CD4-positive, alpha-beta T cell (primary cell): ENCODE measurements at regions of chr6 and their contacts with region 1.

Region 1: GRCh38 chr6:116531675-116532570 is 13.6 kb downstream of the TRAPPC3L start:
- DNase-seq: peak; percentile 31 to 83 (median 52)
- ATAC-seq: peak; percentile 99
- H3K4me3 ChIP-seq: no peak overlapping the region
- H3K4me3 Mint-ChIP-seq: no peak overlapping the region
- H3K27ac ChIP-seq: no peak overlapping the region
- H3K27ac Mint-ChIP-seq: no peak overlapping the region
- H3K4me1 ChIP-seq: no peaks in the 10 kb centered on the region
- H3K4me1 Mint-ChIP-seq: no peaks in the 10 kb centered on the region
- H3K27me3 ChIP-seq: peaks cover 0 to 5% of the 10 kb centered on the region in 2 experiments
- H3K27me3 Mint-ChIP-seq: peaks cover 38% of the 10 kb centered on the region
- CTCF ChIP-seq: peak; percentile 83

Region 2: GRCh38 chr6:116217069-116217468 is 314.9 kb before region 1 on chr6:
- CTCF ChIA-PET with region 1: no interaction called
- POLR2A ChIA-PET with region 1: no interaction called
- intact Hi-C with region 1: loop called (anchors 1 to 5 kb)
- DNase-seq: peak in 3 of 14 experiments; percentile 50 to 61 (median 59)
- ATAC-seq: peak; percentile 95
- H3K4me3 ChIP-seq: no peak overlapping the region
- H3K4me3 Mint-ChIP-seq: no peak overlapping the region
- H3K27ac ChIP-seq: no peak overlapping the region
- H3K27ac Mint-ChIP-seq: no peak overlapping the region
- H3K4me1 ChIP-seq: no peaks in the 10 kb centered on the region
- H3K4me1 Mint-ChIP-seq: peaks cover 7% of the 10 kb centered on the region
- H3K27me3 ChIP-seq: no peaks in the 10 kb centered on the region
- H3K27me3 Mint-ChIP-seq: no peaks in the 10 kb centered on the region
- CTCF ChIP-seq: peak; percentile 64

Region 3: GRCh38 chr6:116287689-116288282 is 244.1 kb before region 1 on chr6:
- CTCF ChIA-PET with region 1: interaction called, 3 read pairs
- POLR2A ChIA-PET with region 1: no interaction called
- intact Hi-C with region 1: loop called (anchors 1 kb)
- DNase-seq: peak in 3 of 14 experiments; percentile 59 to 71 (median 67)
- ATAC-seq: peak; percentile 87
- H3K4me3 ChIP-seq: no peak overlapping the region
- H3K4me3 Mint-ChIP-seq: no peak overlapping the region
- H3K27ac ChIP-seq: no peak overlapping the region
- H3K27ac Mint-ChIP-seq: no peak overlapping the region
- H3K4me1 ChIP-seq: no peaks in the 10 kb centered on the region
- H3K4me1 Mint-ChIP-seq: no peaks in the 10 kb centered on the region
- H3K27me3 ChIP-seq: no peaks in the 10 kb centered on the region
- H3K27me3 Mint-ChIP-seq: no peaks in the 10 kb centered on the region
- CTCF ChIP-seq: peak; percentile 96

Region 4: DNA sequence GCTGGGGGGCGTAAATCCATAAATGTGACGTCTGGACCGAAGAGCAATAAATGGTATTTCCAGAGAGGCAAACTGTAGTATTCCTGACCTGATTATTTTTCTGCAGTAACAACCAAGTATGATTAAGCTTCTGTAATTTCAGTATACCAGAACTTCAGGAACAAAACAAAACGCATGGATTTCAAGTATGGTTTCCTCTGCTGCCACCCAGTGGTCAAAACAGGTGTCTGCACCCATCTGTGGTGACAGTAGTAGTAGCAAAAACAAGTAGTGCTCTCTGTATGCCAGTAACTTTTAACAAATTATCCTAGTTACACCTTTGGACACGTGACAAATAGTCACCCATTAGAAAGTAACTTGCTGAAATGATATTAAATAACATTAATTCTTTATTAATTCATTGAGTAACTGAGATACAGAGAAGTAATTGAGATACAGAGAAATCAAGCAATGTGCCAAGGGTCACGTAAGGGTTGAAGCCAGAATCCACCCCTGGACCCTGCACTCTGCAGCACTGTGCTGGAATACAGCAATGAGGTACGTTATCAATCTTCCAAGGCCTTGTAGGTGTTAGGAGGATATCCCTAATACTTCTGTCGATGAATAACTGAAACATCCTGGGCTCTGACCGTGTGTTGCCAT is 29.6 kb after region 1 on chr6:
- CTCF ChIA-PET with region 1: interaction called, 11 read pairs
- POLR2A ChIA-PET with region 1: no interaction called
- intact Hi-C with region 1: no loop called
- DNase-seq: peak; percentile 39 to 82 (median 55)
- ATAC-seq: peak; percentile 85
- H3K4me3 ChIP-seq: no peak overlapping the region
- H3K4me3 Mint-ChIP-seq: no peak overlapping the region
- H3K27ac ChIP-seq: no peak overlapping the region
- H3K27ac Mint-ChIP-seq: no peak overlapping the region
- H3K4me1 ChIP-seq: peaks cover 8% of the 10 kb centered on the region
- H3K4me1 Mint-ChIP-seq: no peaks in the 10 kb centered on the region
- H3K27me3 ChIP-seq: peaks cover 0 to 14% of the 10 kb centered on the region in 2 experiments
- H3K27me3 Mint-ChIP-seq: peaks cover 10% of the 10 kb centered on the region
- CTCF ChIP-seq: peak; percentile 98

Region 5: GRCh38 chr6:116847227-116847626 is 315.3 kb after region 1 on chr6:
- CTCF ChIA-PET with region 1: no interaction called
- POLR2A ChIA-PET with region 1: no interaction called
- intact Hi-C with region 1: loop called in 1 of 2 experiments (anchors 10 kb)
- DNase-seq: no peak
- ATAC-seq: no peak
- H3K4me3 ChIP-seq: no peak overlapping the region
- H3K4me3 Mint-ChIP-seq: no peak overlapping the region
- H3K27ac ChIP-seq: no peak overlapping the region
- H3K27ac Mint-ChIP-seq: no peak overlapping the region
- H3K4me1 ChIP-seq: no peaks in the 10 kb centered on the region
- H3K4me1 Mint-ChIP-seq: no peaks in the 10 kb centered on the region
- H3K27me3 ChIP-seq: peaks cover 0 to 4% of the 10 kb centered on the region in 2 experiments
- H3K27me3 Mint-ChIP-seq: no peaks in the 10 kb centered on the region
- CTCF ChIP-seq: no peak

Region 6: GRCh38 chr6:117849087-117849486 is 1317.2 kb after region 1 on chr6:
- CTCF ChIA-PET with region 1: no interaction called
- POLR2A ChIA-PET with region 1: no interaction called
- intact Hi-C with region 1: no loop called
- DNase-seq: no peak
- ATAC-seq: no peak
- H3K4me3 ChIP-seq: no peak overlapping the region
- H3K4me3 Mint-ChIP-seq: no peak overlapping the region
- H3K27ac ChIP-seq: no peak overlapping the region
- H3K27ac Mint-ChIP-seq: no peak overlapping the region
- H3K4me1 ChIP-seq: no peaks in the 10 kb centered on the region
- H3K4me1 Mint-ChIP-seq: no peaks in the 10 kb centered on the region
- H3K27me3 ChIP-seq: no peaks in the 10 kb centered on the region
- H3K27me3 Mint-ChIP-seq: no peaks in the 10 kb centered on the region
- CTCF ChIP-seq: no peak